Psoas muscle (tissue), 8 donors: ENCODE measurements at regions of chr16 and their contacts with region 1.

Region 1: GRCh38 chr16:4766874-4767628 is at the start of gene ZNF500:
- DNase-seq: peak; percentile 99
- ATAC-seq: peak; percentile 92 to 97 (median 94)
- H3K4me3 ChIP-seq: peak within 1 kb of the TSS; percentile 77
- H3K27ac ChIP-seq: peak within 1 kb of the TSS; percentile 78
- H3K4me1 ChIP-seq: peaks cover 19% of the 10 kb centered on the region
- H3K27me3 ChIP-seq: no peaks in the 10 kb centered on the region
- CTCF ChIP-seq: no peak
- total RNA-seq, gene ZNF500: 4.8 to 8.9 (median 7.9) TPM

Region 2: GRCh38 chr16:4802659-4803287 is 35.7 kb after region 1 on chr16:
- intact Hi-C with region 1: loop called in 1 of 2 experiments (anchors 5 kb)
- DNase-seq: peak; percentile 93 to 96
- ATAC-seq: peak; percentile 96
- H3K4me3 ChIP-seq: peak overlapping the region; percentile 75
- H3K27ac ChIP-seq: peak overlapping the region; percentile 59
- H3K4me1 ChIP-seq: peaks cover 12% of the 10 kb centered on the region
- H3K27me3 ChIP-seq: no peaks in the 10 kb centered on the region
- CTCF ChIP-seq: peak; percentile 15

Region 3: GRCh38 chr16:4846891-4847773 is 80.1 kb after region 1 on chr16 and contains the starts of genes GLYR1 and UBN1:
- intact Hi-C with region 1: loop called in 1 of 2 experiments (anchors 10 kb)
- DNase-seq: peak; percentile 100
- ATAC-seq: peak; percentile 95 to 96 (median 96)
- H3K4me3 ChIP-seq: peak within 1 kb of the TSS; percentile 98
- H3K27ac ChIP-seq: peak within 1 kb of the TSS; percentile 99
- H3K4me1 ChIP-seq: peaks cover 56% of the 10 kb centered on the region
- H3K27me3 ChIP-seq: no peaks in the 10 kb centered on the region
- CTCF ChIP-seq: no peak
- total RNA-seq, gene GLYR1: 53.3 to 74.1 (median 66.8) TPM
- total RNA-seq, gene UBN1: 25.5 to 33.3 (median 28.0) TPM

Region 4: GRCh38 chr16:5025171-5025632 is 258.2 kb after region 1 on chr16:
- intact Hi-C with region 1: loop called in 1 of 2 experiments (anchors 10 kb)
- DNase-seq: no peak
- ATAC-seq: peak; percentile 31 to 62 (median 45)
- H3K4me3 ChIP-seq: no peak overlapping the region
- H3K27ac ChIP-seq: no peak overlapping the region
- H3K4me1 ChIP-seq: peaks cover 10% of the 10 kb centered on the region
- H3K27me3 ChIP-seq: peaks cover 0 to 3% (median 0%) of the 10 kb centered on the region in 3 donors
- CTCF ChIP-seq: peak; percentile 21